PC-9 (cell line): ENCODE measurements at regions of chr2 and their contacts with region 1.

Region 1: GRCh38 chr2:191650896-191651773 is 26.8 kb upstream of the NABP1 start:
- DNase-seq: no peak
- H3K4me3 ChIP-seq: no peak overlapping the region
- H3K27ac ChIP-seq: no peak overlapping the region
- H3K4me1 ChIP-seq: peaks cover 22% of the 10 kb centered on the region
- H3K27me3 ChIP-seq: no peaks in the 10 kb centered on the region
- CTCF ChIP-seq: no peak

Region 2: GRCh38 chr2:191566344-191566743 is 84.8 kb before region 1 on chr2:
- CTCF ChIA-PET with region 1: no interaction called
- POLR2A ChIA-PET with region 1: interaction called, 16 read pairs
- intact Hi-C with region 1: no loop called
- DNase-seq: peak; percentile 48 to 63
- H3K4me3 ChIP-seq: no peak overlapping the region
- H3K27ac ChIP-seq: peak overlapping the region; percentile 63
- H3K4me1 ChIP-seq: peaks cover 46% of the 10 kb centered on the region
- H3K27me3 ChIP-seq: no peaks in the 10 kb centered on the region
- CTCF ChIP-seq: peak; percentile 77

Region 3: DNA sequence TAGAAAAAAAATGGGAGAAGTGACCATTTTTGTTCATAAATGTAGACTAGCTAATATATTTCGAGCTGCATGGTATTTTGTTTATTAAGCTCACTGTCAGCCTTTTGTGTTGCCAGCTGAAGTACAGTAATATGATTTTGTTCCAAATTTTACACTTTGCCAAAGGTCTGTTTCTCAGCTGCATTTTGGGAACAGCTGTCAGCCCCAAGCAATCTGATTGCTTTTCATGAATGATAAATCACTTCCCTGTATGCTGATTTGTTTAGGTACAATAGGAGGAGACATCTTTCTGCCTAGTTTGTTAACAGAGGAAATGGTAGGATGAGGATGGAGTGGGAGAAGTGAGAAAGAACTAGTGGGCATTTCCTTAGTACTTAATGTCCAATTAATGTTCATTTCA is 106.1 kb after region 1 on chr2:
- CTCF ChIA-PET with region 1: interaction called, 11 read pairs
- POLR2A ChIA-PET with region 1: no interaction called
- intact Hi-C with region 1: no loop called
- DNase-seq: no peak
- H3K4me3 ChIP-seq: no peak overlapping the region
- H3K27ac ChIP-seq: no peak overlapping the region
- H3K4me1 ChIP-seq: no peaks in the 10 kb centered on the region
- H3K27me3 ChIP-seq: no peaks in the 10 kb centered on the region
- CTCF ChIP-seq: no peak